ENCODE measurements at regions of chr2 and their contacts with region 1.

Region 1: GRCh38 chr2:46589358-46589757 is 110.0 kb downstream of the TMEM247 start:
- DNase-seq: no peak
- ATAC-seq: no peak
- H3K4me3 ChIP-seq: no peak overlapping the region
- H3K4me3 Mint-ChIP-seq: no peak overlapping the region
- H3K27ac ChIP-seq: peak overlapping the region in 1 of 2 donors; percentile 59
- H3K27ac Mint-ChIP-seq: no peak overlapping the region
- H3K4me1 ChIP-seq: no peaks in the 10 kb centered on the region
- H3K4me1 Mint-ChIP-seq: peaks cover 4% of the 10 kb centered on the region
- H3K27me3 ChIP-seq: no peaks in the 10 kb centered on the region
- H3K27me3 Mint-ChIP-seq: no peaks in the 10 kb centered on the region
- CTCF ChIP-seq: no peak

Region 2: GRCh38 chr2:46574457-46575355 is 14.7 kb before region 1 on chr2:
- CTCF ChIA-PET with region 1: interaction called, 7 read pairs
- POLR2A ChIA-PET with region 1: interaction called, 3 read pairs
- intact Hi-C with region 1: loop called (anchors 2 kb)
- DNase-seq: no peak
- ATAC-seq: no peak
- H3K4me3 ChIP-seq: peak overlapping the region in 3 of 5 experiments; percentile 18 to 53 (median 28)
- H3K4me3 Mint-ChIP-seq: peak overlapping the region; percentile 73
- H3K27ac ChIP-seq: peak overlapping the region; percentile 58 to 98
- H3K27ac Mint-ChIP-seq: peak overlapping the region; percentile 86
- H3K4me1 ChIP-seq: peaks cover 61 to 69% of the 10 kb centered on the region in 2 donors
- H3K4me1 Mint-ChIP-seq: peaks cover 76% of the 10 kb centered on the region
- H3K27me3 ChIP-seq: no peaks in the 10 kb centered on the region
- H3K27me3 Mint-ChIP-seq: no peaks in the 10 kb centered on the region
- CTCF ChIP-seq: no peak